CD4-positive, alpha-beta T cell (primary cell): ENCODE measurements at regions of chr15 and their contacts with region 1.

Region 1: DNA sequence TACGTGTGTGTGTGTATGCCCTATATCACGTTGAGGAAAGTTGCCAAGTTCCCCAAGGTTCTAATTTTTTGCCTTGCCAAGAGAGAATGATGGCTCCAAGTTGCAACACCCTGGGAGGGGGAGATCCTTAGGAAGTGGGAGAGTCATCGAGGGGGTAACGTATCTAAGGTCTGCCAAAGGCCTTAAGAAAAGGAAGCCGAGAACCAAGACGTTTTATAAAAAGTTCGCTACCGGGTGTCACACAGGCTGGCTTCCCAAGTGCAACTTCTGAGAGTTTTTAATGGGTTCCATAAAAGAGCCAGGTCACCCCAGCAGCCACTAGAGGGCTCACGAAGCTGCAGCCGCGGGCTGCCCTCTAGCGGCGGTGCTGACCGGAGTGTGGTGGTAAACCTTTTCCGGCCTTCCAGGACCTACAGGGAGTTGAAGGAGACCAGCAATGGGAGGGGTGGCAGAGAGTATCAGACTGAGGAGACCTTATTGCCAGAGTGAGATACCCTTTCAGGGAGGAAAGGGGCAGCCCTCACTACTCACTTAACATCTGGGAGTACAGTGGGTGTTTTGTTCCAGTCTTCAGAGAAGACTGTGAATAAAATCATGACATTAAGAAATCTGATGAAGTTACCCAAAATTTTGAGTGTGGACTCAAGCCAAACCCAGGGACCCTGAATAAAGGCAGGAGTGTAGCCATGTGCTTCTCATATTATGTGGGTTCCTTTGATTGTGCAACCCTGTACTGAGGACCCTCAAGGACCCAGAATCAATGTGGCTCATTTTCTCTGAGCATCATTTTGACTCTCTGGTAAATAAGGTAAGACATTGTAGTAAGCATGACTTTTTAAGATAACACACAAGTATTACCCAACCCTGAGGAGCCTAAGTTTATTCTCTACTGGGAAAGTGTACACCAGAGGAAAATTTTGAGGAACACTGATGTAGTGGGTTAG is 2.5 kb upstream of the RFX7 start:
- DNase-seq: peak; percentile 77 to 92 (median 83)
- ATAC-seq: peak; percentile 75
- H3K4me3 ChIP-seq: peak overlapping the region; percentile 73
- H3K4me3 Mint-ChIP-seq: peak overlapping the region; percentile 98
- H3K27ac ChIP-seq: peak overlapping the region; percentile 8 to 46
- H3K27ac Mint-ChIP-seq: peak overlapping the region; percentile 90
- H3K4me1 ChIP-seq: peaks cover 21% of the 10 kb centered on the region
- H3K4me1 Mint-ChIP-seq: peaks cover 37% of the 10 kb centered on the region
- H3K27me3 ChIP-seq: no peaks in the 10 kb centered on the region
- H3K27me3 Mint-ChIP-seq: no peaks in the 10 kb centered on the region
- CTCF ChIP-seq: peak; percentile 100

Region 2: DNA sequence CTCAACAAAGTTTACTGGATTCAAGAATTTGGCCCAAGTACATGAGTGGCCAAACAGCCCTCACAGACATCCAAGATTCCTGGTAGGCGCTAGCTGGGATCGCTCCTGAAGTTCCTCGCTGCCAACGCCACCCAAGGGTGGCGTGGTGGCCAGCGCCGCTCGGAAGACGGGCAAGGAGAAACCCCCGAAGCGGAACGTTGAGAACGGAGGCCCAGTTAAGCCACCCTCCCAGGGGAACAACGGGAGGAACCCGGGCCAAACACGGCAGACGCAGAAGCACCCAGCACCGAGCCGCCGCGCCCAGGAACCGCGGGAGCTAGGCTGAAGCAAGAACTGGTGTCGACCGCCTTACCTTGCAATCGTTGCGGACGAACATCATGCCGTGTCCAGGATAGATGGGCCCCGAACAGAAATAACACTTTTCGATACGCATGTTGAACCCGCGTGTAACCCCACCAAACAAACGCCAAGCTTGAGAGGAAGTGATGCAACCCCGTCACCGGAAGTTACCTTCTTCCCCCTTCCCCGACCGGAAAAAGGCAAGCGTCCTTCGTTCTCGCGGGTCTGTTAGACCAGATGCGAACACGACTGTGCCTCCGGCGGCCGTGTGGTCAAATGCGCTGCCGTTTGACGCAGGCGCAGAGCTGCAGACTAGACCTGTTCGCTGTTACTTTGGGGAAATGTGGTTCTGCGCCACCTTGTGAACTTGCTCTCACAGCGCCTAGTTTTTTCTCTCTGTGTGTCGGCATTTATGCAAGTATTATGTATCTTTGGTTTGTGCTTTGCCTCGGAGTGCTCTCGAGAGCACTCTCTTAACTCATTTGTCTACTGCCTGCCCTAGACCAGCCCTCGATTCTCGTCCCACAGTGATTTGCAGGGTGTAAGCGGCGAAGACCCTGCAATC is 1049.4 kb before region 1 on chr15 and contains the start of gene RSL24D1:
- CTCF ChIA-PET with region 1: no interaction called
- POLR2A ChIA-PET with region 1: interaction called, 5 read pairs
- intact Hi-C with region 1: loop called in 1 of 2 experiments (anchors 5 kb)
- DNase-seq: peak; percentile 91 to 100 (median 95)
- ATAC-seq: peak; percentile 96
- H3K4me3 ChIP-seq: peak within 1 kb of the TSS; percentile 89
- H3K4me3 Mint-ChIP-seq: no peak within 1 kb of the TSS
- H3K27ac ChIP-seq: peak within 1 kb of the TSS; percentile 79 to 92
- H3K27ac Mint-ChIP-seq: no peak within 1 kb of the TSS
- H3K4me1 ChIP-seq: peaks cover 18% of the 10 kb centered on the region
- H3K4me1 Mint-ChIP-seq: peaks cover 21% of the 10 kb centered on the region
- H3K27me3 ChIP-seq: no peaks in the 10 kb centered on the region
- H3K27me3 Mint-ChIP-seq: no peaks in the 10 kb centered on the region
- CTCF ChIP-seq: peak; percentile 55
- total RNA-seq, gene RSL24D1: 163 to 164 TPM

Region 3: DNA sequence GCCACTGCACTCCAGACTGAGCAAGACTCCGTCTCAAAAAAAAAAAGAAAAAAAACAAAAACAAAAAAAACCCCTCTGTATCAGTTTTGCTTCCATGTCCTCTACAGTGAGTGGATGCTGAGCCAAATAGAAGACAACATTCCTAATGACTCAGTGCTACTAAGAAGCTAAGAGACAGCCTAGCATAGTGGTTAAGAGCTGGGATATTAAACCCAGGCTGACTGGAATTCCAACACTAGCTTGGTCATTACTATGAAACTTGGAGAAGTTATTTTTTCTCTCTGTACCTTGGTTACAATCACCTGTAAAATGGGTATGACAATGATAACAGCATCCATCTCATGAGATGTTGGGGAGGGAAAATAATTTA is 597.1 kb before region 1 on chr15:
- CTCF ChIA-PET with region 1: no interaction called
- POLR2A ChIA-PET with region 1: no interaction called
- intact Hi-C with region 1: loop called (anchors 5 to 10 kb)
- DNase-seq: no peak
- ATAC-seq: no peak
- H3K4me3 ChIP-seq: no peak overlapping the region
- H3K4me3 Mint-ChIP-seq: no peak overlapping the region
- H3K27ac ChIP-seq: no peak overlapping the region
- H3K27ac Mint-ChIP-seq: no peak overlapping the region
- H3K4me1 ChIP-seq: no peaks in the 10 kb centered on the region
- H3K4me1 Mint-ChIP-seq: no peaks in the 10 kb centered on the region
- H3K27me3 ChIP-seq: no peaks in the 10 kb centered on the region
- H3K27me3 Mint-ChIP-seq: no peaks in the 10 kb centered on the region
- CTCF ChIP-seq: no peak

Region 4: GRCh38 chr15:55921744-55922143 is 324.4 kb before region 1 on chr15:
- CTCF ChIA-PET with region 1: no interaction called
- POLR2A ChIA-PET with region 1: no interaction called
- intact Hi-C with region 1: no loop called
- DNase-seq: no peak
- ATAC-seq: no peak
- H3K4me3 ChIP-seq: no peak overlapping the region
- H3K4me3 Mint-ChIP-seq: no peak overlapping the region
- H3K27ac ChIP-seq: no peak overlapping the region
- H3K27ac Mint-ChIP-seq: no peak overlapping the region
- H3K4me1 ChIP-seq: no peaks in the 10 kb centered on the region
- H3K4me1 Mint-ChIP-seq: no peaks in the 10 kb centered on the region
- H3K27me3 ChIP-seq: no peaks in the 10 kb centered on the region
- H3K27me3 Mint-ChIP-seq: no peaks in the 10 kb centered on the region
- CTCF ChIP-seq: no peak

Region 5: GRCh38 chr15:56040081-56041035 is 205.8 kb before region 1 on chr15:
- CTCF ChIA-PET with region 1: no interaction called
- POLR2A ChIA-PET with region 1: no interaction called
- intact Hi-C with region 1: loop called in 1 of 2 experiments (anchors 2 kb)
- DNase-seq: peak in 2 of 14 experiments; percentile 45 to 60
- ATAC-seq: no peak
- H3K4me3 ChIP-seq: no peak overlapping the region
- H3K4me3 Mint-ChIP-seq: no peak overlapping the region
- H3K27ac ChIP-seq: no peak overlapping the region
- H3K27ac Mint-ChIP-seq: peak overlapping the region; percentile 12
- H3K4me1 ChIP-seq: peaks cover 22% of the 10 kb centered on the region
- H3K4me1 Mint-ChIP-seq: peaks cover 50% of the 10 kb centered on the region
- H3K27me3 ChIP-seq: no peaks in the 10 kb centered on the region
- H3K27me3 Mint-ChIP-seq: no peaks in the 10 kb centered on the region
- CTCF ChIP-seq: no peak

Region 6: GRCh38 chr15:56180851-56181250 is 65.3 kb before region 1 on chr15:
- CTCF ChIA-PET with region 1: no interaction called
- POLR2A ChIA-PET with region 1: no interaction called
- intact Hi-C with region 1: loop called in 1 of 2 experiments (anchors 5 kb)
- DNase-seq: no peak
- ATAC-seq: no peak
- H3K4me3 ChIP-seq: no peak overlapping the region
- H3K4me3 Mint-ChIP-seq: no peak overlapping the region
- H3K27ac ChIP-seq: no peak overlapping the region
- H3K27ac Mint-ChIP-seq: no peak overlapping the region
- H3K4me1 ChIP-seq: no peaks in the 10 kb centered on the region
- H3K4me1 Mint-ChIP-seq: peaks cover 37% of the 10 kb centered on the region
- H3K27me3 ChIP-seq: no peaks in the 10 kb centered on the region
- H3K27me3 Mint-ChIP-seq: no peaks in the 10 kb centered on the region
- CTCF ChIP-seq: no peak

Region 7: GRCh38 chr15:56732921-56733797 is 487.0 kb after region 1 on chr15 and contains the start of gene ZNF280D:
- CTCF ChIA-PET with region 1: no interaction called
- POLR2A ChIA-PET with region 1: interaction called, 4 read pairs
- intact Hi-C with region 1: loop called in 1 of 2 experiments (anchors 5 kb)
- DNase-seq: peak; percentile 65 to 91 (median 74)
- ATAC-seq: peak; percentile 87
- H3K4me3 ChIP-seq: peak within 1 kb of the TSS; percentile 79
- H3K4me3 Mint-ChIP-seq: peak within 1 kb of the TSS; percentile 89
- H3K27ac ChIP-seq: peak within 1 kb of the TSS in 1 of 2 donors; percentile 48
- H3K27ac Mint-ChIP-seq: peak within 1 kb of the TSS; percentile 92
- H3K4me1 ChIP-seq: peaks cover 27% of the 10 kb centered on the region
- H3K4me1 Mint-ChIP-seq: peaks cover 42% of the 10 kb centered on the region
- H3K27me3 ChIP-seq: no peaks in the 10 kb centered on the region
- H3K27me3 Mint-ChIP-seq: no peaks in the 10 kb centered on the region
- CTCF ChIP-seq: no peak
- total RNA-seq, gene ZNF280D: 27.2 to 30.3 TPM

Region 8: GRCh38 chr15:57706405-57707209 is 1460.5 kb after region 1 on chr15 and contains the start of gene POLR2M:
- CTCF ChIA-PET with region 1: no interaction called
- POLR2A ChIA-PET with region 1: interaction called, 4 read pairs
- intact Hi-C with region 1: loop called in 1 of 2 experiments (anchors 10 kb)
- DNase-seq: peak; percentile 78 to 98 (median 86)
- ATAC-seq: peak; percentile 88
- H3K4me3 ChIP-seq: peak within 1 kb of the TSS; percentile 90
- H3K4me3 Mint-ChIP-seq: peak within 1 kb of the TSS; percentile 85
- H3K27ac ChIP-seq: peak within 1 kb of the TSS; percentile 87 to 95
- H3K27ac Mint-ChIP-seq: peak within 1 kb of the TSS; percentile 99
- H3K4me1 ChIP-seq: peaks cover 35% of the 10 kb centered on the region
- H3K4me1 Mint-ChIP-seq: peaks cover 93% of the 10 kb centered on the region
- H3K27me3 ChIP-seq: no peaks in the 10 kb centered on the region
- H3K27me3 Mint-ChIP-seq: no peaks in the 10 kb centered on the region
- CTCF ChIP-seq: no peak
- total RNA-seq, gene POLR2M: 88.5 to 109 TPM